ENCODE measurements at regions of chr15 and their contacts with region 1.

Region 1: GRCh38 chr15:70679919-70680231 is 83.5 kb downstream of the UACA start:
- DNase-seq: no peak
- ATAC-seq: peak in 1 of 4 donors; percentile 55
- H3K4me3 ChIP-seq: no peak overlapping the region
- H3K27ac ChIP-seq: no peak overlapping the region
- H3K4me1 ChIP-seq: peaks cover 9% of the 10 kb centered on the region
- H3K27me3 ChIP-seq: no peaks in the 10 kb centered on the region
- CTCF ChIP-seq: no peak

Region 2: DNA sequence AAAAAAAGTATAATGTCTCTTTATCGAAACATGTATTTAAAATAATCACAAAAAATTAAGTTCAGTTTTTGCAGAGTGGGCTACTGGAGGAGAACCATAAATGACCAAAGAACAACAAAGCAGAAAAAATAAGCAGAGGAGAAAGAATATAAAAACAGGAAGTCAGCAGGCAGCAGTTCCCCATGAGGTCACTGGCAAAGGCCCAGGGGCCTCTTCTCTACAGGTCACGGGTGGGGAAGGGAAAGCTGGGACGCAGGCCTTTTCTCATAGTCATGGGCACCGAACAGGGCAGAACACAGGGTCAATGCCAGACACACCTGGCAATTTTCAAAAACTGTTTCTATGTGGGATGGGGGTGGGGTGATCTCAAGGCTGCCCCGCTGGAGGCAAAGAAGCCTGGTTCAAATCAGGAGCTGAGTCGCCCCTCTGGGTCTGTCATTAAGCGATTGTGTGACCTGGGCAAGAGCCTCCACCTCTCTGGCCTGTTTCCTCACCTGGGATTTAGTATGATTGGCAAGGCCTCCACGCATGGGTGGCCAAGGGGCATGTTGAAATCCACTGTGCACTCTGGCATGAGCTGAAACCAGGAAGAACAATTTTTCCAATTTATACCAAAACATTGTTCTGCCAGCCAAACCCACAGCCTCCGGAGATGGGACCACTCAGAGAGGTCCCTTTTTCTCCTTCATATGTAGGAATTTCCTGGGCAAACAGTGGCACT is 127.3 kb after region 1 on chr15:
- intact Hi-C with region 1: loop called (anchors 2 kb)
- DNase-seq: peak; percentile 44 to 64
- ATAC-seq: no peak
- H3K4me3 ChIP-seq: no peak overlapping the region
- H3K27ac ChIP-seq: no peak overlapping the region
- H3K4me1 ChIP-seq: peaks cover 6% of the 10 kb centered on the region
- H3K27me3 ChIP-seq: no peaks in the 10 kb centered on the region
- CTCF ChIP-seq: no peak

Region 3: DNA sequence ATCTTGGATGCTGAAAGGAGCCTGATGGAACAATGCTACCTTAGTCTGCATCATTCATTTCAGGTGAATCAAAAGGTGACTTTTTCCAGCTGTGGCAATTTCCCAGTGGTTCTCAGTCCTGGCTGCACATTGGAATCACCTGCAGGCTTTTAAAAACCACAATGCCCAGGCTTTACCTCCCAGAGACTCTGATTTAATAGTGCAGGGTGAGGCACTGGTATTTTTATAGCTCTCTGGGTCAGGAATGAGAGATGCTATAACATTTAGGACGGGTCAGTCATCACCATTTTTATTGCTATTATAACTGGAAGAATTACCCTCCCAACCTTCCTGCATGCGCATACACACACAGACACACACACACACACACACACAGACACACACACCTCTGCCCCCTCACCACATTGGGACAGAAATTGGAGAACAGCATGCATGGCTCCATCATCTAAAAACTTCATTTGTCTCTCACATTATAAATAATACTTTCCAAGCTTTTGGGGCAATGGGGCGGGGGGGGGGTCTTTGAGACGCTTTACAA is 133.0 kb after region 1 on chr15:
- intact Hi-C with region 1: loop called (anchors 2 kb)
- DNase-seq: no peak
- ATAC-seq: no peak
- H3K4me3 ChIP-seq: no peak overlapping the region
- H3K27ac ChIP-seq: no peak overlapping the region
- H3K4me1 ChIP-seq: no peaks in the 10 kb centered on the region
- H3K27me3 ChIP-seq: no peaks in the 10 kb centered on the region
- CTCF ChIP-seq: no peak